Activated CD4-positive, alpha-beta T cell treated with anti-CD3 and anti-CD28 coated beads, Interleukin-2, amount 10 ng/mL, durations not matched to agents 7 days and 5 days (primary cell): ENCODE measurements at regions of chr7 and their contacts with region 1.

Region 1: DNA sequence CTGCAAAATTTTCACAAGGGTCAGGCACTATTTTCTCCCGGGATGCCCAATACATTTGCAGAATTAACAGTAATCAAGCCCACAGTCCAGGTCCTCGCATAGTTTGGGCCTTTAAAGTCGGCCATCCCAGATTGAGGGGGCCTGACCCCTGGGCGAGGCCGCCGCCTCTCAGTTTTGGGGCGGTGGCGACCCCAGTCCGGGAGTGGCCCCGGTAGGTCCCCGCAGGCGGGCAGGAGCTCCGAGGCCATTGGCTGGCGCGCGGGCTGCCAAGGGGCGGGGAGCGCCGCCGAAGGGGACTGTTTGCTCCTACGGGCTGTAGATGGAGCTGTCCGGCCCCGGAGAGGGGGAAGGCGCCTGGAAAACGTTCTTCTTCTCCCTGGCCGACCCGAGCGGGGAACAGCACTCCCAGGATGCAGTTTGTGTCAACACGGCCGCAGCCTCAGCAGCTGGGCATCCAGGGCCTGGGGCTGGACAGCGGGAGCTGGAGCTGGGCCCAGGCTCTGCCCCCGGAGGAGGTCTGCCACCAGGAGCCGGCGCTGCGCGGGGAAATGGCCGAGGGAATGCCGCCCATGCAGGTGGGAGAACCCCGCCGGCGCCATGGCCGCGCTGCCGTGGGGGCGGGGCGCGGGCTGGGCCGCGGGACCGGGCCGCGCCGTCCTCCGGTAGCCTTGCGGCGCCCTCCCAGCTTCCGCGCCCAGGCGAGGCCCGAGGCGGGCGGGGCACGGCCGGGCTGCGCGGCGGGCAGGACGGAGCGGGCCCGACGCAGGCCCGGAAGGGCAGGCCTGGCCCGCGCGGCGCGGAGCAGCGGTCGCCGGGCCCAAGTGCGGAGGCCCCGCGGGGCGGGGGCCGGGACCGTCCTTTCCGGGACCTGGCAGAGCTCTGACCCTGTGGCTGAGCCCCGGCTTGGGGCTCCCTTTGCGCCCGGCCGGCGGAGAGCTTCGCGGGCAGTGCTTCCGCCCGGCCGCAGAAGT is at the start of gene ZNF282:
- DNase-seq: peak; percentile 74
- H3K4me3 Mint-ChIP-seq: peak within 1 kb of the TSS; percentile 93
- H3K27ac Mint-ChIP-seq: peak within 1 kb of the TSS; percentile 90
- H3K4me1 Mint-ChIP-seq: peaks cover 52% of the 10 kb centered on the region
- H3K27me3 Mint-ChIP-seq: peaks cover 4% of the 10 kb centered on the region
- total RNA-seq, gene ZNF282: 28.2 to 29.4 TPM

Region 2: GRCh38 chr7:149154030-149154429 is 41.4 kb before region 1 on chr7:
- CTCF ChIA-PET with region 1: no interaction called
- POLR2A ChIA-PET with region 1: no interaction called
- DNase-seq: no peak
- H3K4me3 Mint-ChIP-seq: no peak overlapping the region
- H3K27ac Mint-ChIP-seq: no peak overlapping the region
- H3K4me1 Mint-ChIP-seq: peaks cover 15% of the 10 kb centered on the region
- H3K27me3 Mint-ChIP-seq: no peaks in the 10 kb centered on the region

Region 3: DNA sequence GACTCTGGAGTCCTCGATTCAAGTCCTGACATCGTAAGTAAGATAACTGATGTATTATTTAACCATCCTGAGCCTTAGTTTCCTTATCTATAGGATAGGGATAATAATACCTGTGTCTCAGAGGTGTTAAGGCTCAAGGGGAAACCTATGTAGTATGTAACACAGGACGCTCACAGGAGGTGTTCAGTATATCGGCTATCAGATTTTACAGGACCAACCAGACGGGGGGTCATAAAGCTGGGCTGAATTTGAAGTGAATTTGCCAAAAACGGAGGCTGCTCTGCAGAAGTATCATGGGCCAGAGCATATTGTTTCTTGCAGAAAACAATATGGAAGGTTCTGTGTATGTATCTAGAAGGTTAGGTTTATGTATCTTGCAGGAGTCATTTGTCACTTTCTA is 11.2 kb before region 1 on chr7:
- CTCF ChIA-PET with region 1: interaction called, 12 read pairs
- POLR2A ChIA-PET with region 1: no interaction called
- DNase-seq: no peak
- H3K4me3 Mint-ChIP-seq: no peak overlapping the region
- H3K27ac Mint-ChIP-seq: no peak overlapping the region
- H3K4me1 Mint-ChIP-seq: peaks cover 3% of the 10 kb centered on the region
- H3K27me3 Mint-ChIP-seq: no peaks in the 10 kb centered on the region

Region 4: GRCh38 chr7:149207324-149208035 is 12.0 kb after region 1 on chr7:
- CTCF ChIA-PET with region 1: interaction called, 12 read pairs
- POLR2A ChIA-PET with region 1: no interaction called
- DNase-seq: no peak
- H3K4me3 Mint-ChIP-seq: no peak overlapping the region
- H3K27ac Mint-ChIP-seq: no peak overlapping the region
- H3K4me1 Mint-ChIP-seq: peaks cover 36% of the 10 kb centered on the region
- H3K27me3 Mint-ChIP-seq: no peaks in the 10 kb centered on the region